ENCODE measurements at regions of chr1 and their contacts with region 1.

Region 1: GRCh38 chr1:202122639-202123335 is at the start of gene GPR37L1:
- H3K4me3 Mint-ChIP-seq: no peak within 1 kb of the TSS
- H3K27ac Mint-ChIP-seq: no peak within 1 kb of the TSS
- H3K4me1 Mint-ChIP-seq: peaks cover 7% of the 10 kb centered on the region
- H3K27me3 Mint-ChIP-seq: peaks cover 9% of the 10 kb centered on the region

Region 2: DNA sequence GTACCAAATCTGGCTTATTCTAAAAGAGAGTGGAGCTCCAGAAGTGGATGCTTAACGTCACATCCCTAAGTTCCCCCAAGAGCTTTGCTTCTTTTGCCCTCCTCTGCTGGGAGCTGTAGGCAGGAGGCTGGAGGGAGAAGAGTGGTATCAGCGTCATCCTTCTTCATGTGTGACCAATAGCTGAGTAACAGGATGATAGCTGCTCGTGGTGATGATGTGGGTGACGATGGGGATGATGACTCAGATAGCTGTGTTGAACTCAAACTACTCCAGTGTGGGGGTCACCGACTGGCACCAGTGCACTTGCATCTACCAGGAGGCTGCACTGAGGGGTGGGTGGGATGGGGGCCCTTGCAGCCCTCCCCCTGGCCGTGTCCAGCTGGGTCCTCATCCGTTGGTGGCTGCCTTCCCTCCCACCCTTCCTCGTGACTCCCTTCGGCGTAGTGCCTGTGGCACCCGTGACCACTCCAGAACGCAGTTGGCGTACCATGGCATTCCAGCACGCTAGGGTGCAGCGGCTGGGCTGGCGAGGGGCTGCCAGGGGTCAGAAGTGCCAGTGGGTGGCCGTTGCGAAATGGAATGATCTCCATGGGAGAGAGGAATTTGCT is 931.0 kb before region 1 on chr1:
- intact Hi-C with region 1: no loop called
- H3K4me3 Mint-ChIP-seq: no peak overlapping the region
- H3K27ac Mint-ChIP-seq: no peak overlapping the region
- H3K4me1 Mint-ChIP-seq: no peaks in the 10 kb centered on the region
- H3K27me3 Mint-ChIP-seq: peaks cover 17% of the 10 kb centered on the region

Region 3: DNA sequence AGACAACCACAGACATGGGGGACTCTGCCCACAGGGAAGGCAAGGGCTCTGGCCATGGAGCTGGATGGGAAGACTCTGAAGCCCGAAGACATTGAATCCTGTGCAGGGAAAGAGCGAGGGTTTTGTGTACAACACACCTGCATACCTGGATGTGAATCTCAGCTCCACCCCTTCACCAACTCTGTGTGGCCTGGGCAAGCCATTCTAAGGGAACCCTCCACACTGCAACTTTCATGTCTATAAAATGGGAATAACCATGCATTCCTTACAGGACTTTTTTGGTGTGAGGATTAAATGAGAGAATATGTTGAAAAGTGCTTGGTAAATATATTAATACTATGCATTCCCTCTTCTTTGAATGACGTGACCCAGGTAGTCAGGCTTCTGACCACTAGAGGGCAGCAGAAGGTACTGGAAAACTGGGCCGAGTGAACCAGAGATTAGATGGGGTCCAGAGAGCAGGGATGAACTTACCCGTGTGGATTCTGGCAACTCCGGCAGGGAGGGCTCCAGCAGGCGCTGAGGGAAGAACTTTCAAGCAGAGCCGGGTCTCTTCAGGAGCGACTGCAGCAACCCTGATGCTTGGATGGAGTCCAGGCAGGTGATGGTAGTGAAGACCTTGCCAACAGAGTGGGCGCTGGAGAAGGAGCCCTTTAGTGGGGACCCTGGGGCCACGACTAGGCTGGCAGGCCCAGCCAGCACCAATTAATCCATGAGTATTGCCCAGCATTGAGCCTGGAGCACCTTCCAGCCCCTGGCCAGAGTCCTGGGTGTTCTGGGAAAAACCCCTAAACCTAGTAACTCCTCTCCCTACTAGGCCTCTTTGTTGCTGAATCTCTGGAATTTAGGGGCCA is 113.2 kb before region 1 on chr1:
- intact Hi-C with region 1: loop called (anchors 1 kb)
- H3K4me3 Mint-ChIP-seq: no peak overlapping the region
- H3K27ac Mint-ChIP-seq: no peak overlapping the region
- H3K4me1 Mint-ChIP-seq: no peaks in the 10 kb centered on the region
- H3K27me3 Mint-ChIP-seq: no peaks in the 10 kb centered on the region